Tibial artery (tissue), 4 donors: ENCODE measurements at regions of chr7 and their contacts with region 1.

Region 1: DNA sequence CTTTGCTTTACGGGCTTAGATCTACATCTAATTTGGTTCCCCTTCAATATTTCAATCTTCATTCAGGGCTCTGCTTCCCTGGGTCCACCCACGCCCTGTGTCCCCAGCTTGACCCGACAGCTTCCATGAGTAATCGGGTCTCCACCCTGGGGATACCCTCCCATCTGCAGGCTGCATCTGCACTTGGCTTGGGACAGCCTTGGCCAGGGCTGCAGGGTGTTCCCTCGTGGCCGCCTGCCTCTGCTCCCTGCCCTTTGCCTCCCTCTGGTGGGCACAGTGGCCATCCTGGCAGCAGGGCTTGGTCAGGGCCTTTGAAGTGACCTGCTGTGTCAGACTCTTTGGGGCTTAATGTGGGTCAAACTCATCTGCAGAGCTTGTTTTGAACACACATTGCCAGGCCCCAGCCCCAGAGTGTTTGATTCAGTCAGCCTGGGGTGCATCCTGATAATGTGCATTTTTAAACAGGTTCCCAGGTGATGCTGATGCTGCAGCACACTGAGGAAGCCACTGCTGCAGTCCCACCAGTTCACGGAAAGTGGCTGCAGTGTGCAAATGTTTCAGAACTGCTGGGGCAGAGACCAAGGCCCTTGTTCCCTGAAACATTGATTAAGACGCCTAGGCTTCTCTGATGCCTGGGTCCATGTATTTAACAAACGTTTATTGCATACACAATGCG is 80.7 kb upstream of the SEC61G start:
- DNase-seq: peak; percentile 73 to 81
- H3K4me3 ChIP-seq: no peak overlapping the region
- H3K27ac ChIP-seq: no peak overlapping the region
- H3K4me1 ChIP-seq: peaks cover 0 to 49% (median 35%) of the 10 kb centered on the region in 4 donors
- H3K27me3 ChIP-seq: no peaks in the 10 kb centered on the region
- CTCF ChIP-seq: peak; percentile 65 to 69

Region 2: DNA sequence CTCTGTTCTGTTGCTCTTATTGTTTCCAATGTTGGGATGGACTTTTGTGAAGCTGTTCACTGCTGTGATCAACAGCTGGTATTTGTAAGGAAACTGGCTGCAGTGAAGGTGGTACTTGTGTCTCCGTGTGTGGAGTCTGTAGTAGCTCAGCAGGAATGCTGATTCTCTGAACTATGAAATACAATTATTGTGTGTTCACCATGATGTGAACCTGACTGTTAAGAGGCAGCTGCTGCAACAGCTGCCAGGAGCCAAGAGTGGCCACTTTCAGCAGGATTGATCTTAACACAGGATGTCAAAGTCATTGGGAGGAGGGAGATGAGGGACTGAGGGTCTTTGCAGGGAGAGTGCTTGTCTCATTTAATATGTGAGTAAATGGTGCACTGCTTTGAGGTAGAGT is 283.6 kb before region 1 on chr7:
- intact Hi-C with region 1: no loop called
- DNase-seq: no peak
- H3K4me3 ChIP-seq: no peak overlapping the region
- H3K27ac ChIP-seq: no peak overlapping the region
- H3K4me1 ChIP-seq: no peaks in the 10 kb centered on the region
- H3K27me3 ChIP-seq: no peaks in the 10 kb centered on the region
- CTCF ChIP-seq: no peak

Region 3: DNA sequence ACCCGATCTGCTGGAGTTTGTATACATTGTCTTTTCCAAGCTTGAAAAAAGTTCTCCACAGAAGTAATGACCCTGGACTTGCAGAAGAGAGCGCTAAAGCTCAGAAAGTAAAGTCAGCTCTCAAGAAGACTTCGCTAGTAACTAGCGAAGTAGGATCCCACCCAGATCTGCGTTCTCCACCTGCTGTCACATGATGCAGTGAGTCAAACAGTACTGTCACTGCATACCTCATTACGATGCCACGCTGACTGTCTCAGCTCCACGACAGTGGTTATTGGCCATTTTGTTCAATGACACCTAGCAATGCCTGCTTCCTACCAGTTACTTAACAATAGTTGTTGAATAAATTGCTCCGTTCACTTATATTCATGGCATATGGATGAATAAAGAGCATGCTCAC is 51.0 kb before region 1 on chr7:
- intact Hi-C with region 1: loop called (anchors 5 kb)
- DNase-seq: no peak
- H3K4me3 ChIP-seq: no peak overlapping the region
- H3K27ac ChIP-seq: no peak overlapping the region
- H3K4me1 ChIP-seq: peaks cover 0 to 4% (median 1%) of the 10 kb centered on the region in 4 donors
- H3K27me3 ChIP-seq: no peaks in the 10 kb centered on the region
- CTCF ChIP-seq: peak; percentile 74 to 77